Activated naive CD4-positive, alpha-beta T cell treated with anti-CD3 and anti-CD28 coated beads, Interleukin-2, amount 10 ng/mL, durations not matched to agents 7 days and 5 days (primary cell): ENCODE measurements at regions of chr4 and their contacts with region 1.

Region 1: GRCh38 chr4:26325191-26325590 is 4.4 kb downstream of the RBPJ start:
- DNase-seq: peak; percentile 29
- H3K4me3 Mint-ChIP-seq: no peak overlapping the region
- H3K27ac Mint-ChIP-seq: no peak overlapping the region
- H3K4me1 Mint-ChIP-seq: peaks cover 33% of the 10 kb centered on the region
- H3K27me3 Mint-ChIP-seq: no peaks in the 10 kb centered on the region

Region 2: GRCh38 chr4:25847329-25847728 is 477.9 kb before region 1 on chr4:
- CTCF ChIA-PET with region 1: no interaction called
- DNase-seq: no peak
- H3K4me3 Mint-ChIP-seq: no peak overlapping the region
- H3K27ac Mint-ChIP-seq: no peak overlapping the region
- H3K4me1 Mint-ChIP-seq: peaks cover 51% of the 10 kb centered on the region
- H3K27me3 Mint-ChIP-seq: no peaks in the 10 kb centered on the region

Region 3: GRCh38 chr4:25938787-25939186 is 386.4 kb before region 1 on chr4:
- CTCF ChIA-PET with region 1: no interaction called
- DNase-seq: no peak
- H3K4me3 Mint-ChIP-seq: no peak overlapping the region
- H3K27ac Mint-ChIP-seq: no peak overlapping the region
- H3K4me1 Mint-ChIP-seq: peaks cover 19% of the 10 kb centered on the region
- H3K27me3 Mint-ChIP-seq: peaks cover 8% of the 10 kb centered on the region

Region 4: GRCh38 chr4:25993395-25994185 is 331.6 kb before region 1 on chr4:
- CTCF ChIA-PET with region 1: interaction called, 18 read pairs
- DNase-seq: peak; percentile 25
- H3K4me3 Mint-ChIP-seq: no peak overlapping the region
- H3K27ac Mint-ChIP-seq: no peak overlapping the region
- H3K4me1 Mint-ChIP-seq: peaks cover 2% of the 10 kb centered on the region
- H3K27me3 Mint-ChIP-seq: peaks cover 17% of the 10 kb centered on the region

Region 5: DNA sequence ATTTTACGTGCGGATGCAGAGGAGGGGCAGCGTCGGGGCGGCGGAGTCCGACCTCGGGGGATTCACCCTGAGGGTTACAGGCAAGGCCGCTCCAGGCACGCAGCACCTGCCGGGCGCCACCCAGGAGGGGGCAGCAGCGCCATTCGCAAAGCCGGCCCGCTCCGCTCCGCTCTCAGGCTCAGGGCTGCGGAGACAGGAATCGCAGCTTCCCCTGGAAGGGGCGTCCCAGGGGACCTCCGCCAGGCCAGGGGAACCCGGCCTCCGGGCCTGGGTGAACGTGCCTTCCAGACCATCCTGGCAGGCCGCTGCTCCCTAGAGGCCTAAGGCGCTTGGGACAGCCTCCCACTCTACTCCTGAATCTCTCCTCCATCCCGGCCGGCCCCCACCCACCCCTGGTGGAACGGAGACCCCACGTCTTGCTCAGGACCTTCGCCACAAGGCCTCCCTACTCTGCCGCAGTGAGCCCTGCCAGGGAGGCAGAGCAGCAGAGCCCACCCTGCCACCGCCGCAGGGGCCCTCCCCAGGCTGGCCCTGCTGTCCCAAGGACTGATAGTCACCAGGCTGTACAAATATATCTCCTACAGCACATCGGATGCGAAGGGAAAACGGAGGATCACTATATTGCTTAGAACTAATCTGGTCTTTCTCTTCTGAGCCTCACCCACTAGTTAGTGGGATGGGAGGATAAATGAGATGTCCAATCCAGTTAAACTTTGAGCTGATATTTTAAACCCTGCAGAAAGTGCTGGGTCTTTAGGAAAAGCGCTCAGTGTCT is 296.2 kb before region 1 on chr4:
- CTCF ChIA-PET with region 1: interaction called, 28 read pairs
- DNase-seq: peak; percentile 75
- H3K4me3 Mint-ChIP-seq: no peak overlapping the region
- H3K27ac Mint-ChIP-seq: no peak overlapping the region
- H3K4me1 Mint-ChIP-seq: peaks cover 9% of the 10 kb centered on the region
- H3K27me3 Mint-ChIP-seq: peaks cover 22% of the 10 kb centered on the region

Region 6: DNA sequence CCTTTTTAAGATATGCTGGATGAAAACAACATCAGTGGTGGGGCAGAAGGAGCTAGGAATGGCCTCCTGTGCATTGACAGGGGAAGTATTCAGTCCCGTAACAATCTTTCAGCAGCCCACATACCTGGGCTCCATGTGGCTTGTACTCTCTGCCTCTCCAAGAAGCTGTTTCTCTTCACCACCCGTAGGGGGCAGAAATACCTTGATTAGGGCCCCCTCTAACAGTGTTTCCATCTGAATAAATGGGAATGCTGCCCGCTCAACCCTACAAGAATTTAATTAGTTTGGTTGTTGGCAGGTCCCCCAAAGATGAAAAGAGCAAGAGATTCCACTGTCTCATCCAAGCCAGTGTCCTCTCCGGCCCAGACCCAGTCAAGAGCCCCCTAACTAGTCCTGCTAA is 256.0 kb before region 1 on chr4:
- CTCF ChIA-PET with region 1: interaction called, 97 read pairs
- DNase-seq: no peak
- H3K4me3 Mint-ChIP-seq: no peak overlapping the region
- H3K27ac Mint-ChIP-seq: no peak overlapping the region
- H3K4me1 Mint-ChIP-seq: peaks cover 5% of the 10 kb centered on the region
- H3K27me3 Mint-ChIP-seq: peaks cover 9% of the 10 kb centered on the region